ENCODE measurements at regions of chr20 and their contacts with region 1.

Region 1: DNA sequence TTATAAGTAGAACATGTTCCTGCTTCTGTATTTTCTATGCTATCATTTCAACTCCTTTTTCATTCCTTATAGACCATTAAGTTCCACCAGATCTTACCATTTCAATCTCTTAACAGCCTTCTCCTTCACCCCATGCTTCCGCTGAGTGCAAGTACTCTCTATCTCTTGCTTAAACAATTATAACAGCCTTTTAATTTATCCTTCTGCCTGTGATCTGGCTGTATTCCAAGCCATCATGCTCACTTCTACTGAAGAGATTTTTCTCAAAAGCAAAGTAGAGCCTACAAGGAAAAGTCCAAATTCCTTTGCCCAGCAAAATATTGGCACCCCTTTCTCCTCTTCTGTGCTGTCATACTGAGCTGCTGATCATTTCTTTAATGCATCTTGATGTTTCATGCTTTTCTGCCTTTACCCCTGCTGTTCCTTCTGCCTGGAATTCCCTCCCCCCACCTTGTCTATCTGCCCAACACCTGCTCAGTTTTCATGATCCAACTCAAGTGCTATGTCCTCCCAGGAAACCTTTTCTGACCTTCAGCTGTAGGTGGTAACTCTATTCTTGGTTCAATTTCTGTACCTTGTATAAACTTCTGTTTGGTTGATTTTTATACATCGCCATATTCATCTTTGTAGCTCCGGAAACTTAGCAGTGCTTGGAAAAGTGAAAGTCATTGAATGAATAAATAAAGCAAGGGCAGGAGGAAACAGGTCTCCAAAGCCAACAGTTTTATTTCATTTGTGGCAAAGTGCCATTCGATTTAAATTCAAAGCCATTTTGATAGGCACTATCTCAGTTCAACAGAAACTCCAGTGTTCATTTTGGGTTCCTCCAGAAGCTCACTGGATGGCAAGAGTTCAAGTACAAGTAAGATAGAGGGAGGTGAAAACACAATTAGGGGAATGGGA is 10.5 kb upstream of the BMP2 start:
- H3K4me3 ChIP-seq: no peak overlapping the region
- H3K27ac ChIP-seq: no peak overlapping the region
- H3K4me1 ChIP-seq: peaks cover 4% of the 10 kb centered on the region; the same call in 1 of the 2 replicates
- CTCF ChIP-seq: no peak

Region 2: DNA sequence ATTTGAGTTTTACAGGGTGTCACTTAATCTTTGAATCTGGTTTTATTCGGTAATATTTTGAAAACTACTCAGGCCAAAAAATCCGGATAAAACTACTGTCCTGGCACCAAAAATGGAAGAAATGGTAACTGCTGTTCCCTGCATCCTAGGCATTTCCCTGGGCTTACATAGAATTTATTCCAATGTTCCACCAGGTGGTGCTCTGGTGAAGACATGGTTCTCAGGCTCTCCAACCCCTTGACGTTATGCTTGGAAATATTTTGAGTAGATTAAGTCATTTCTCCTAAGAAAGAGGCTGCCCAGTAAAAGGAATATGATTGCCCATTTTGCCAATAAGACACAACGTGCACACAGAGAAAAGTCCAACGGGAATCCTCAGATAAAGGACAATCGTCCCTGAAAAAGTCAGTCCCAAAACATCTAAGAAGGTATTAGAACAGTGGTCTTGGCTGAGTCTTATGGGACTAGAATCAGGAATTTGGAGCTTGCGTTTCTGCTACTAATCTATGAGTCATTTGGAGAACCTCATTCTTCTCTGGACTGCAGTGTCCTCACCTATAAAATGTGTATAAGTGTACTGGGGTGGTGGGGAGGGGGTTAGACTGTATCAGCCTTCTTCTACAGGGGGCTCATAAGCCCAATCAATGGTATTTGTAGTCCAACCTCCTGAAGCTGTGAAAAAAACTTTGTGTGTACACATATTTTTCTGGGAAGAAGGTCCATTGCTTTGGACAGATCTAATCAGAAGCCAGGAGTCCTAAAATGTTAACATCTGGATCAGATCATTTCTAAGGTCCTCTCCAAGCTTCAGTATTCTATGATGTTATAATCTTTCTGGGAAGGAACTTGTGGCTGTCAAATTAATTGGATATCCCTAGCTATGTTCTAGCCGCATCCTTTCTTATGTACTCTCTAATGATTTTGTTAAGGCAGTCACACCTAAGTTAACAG is 120.5 kb before region 1 on chr20:
- CTCF ChIA-PET with region 1: interaction called, 10 read pairs
- POLR2A ChIA-PET with region 1: no interaction called
- H3K4me3 ChIP-seq: no peak overlapping the region
- H3K27ac ChIP-seq: no peak overlapping the region
- H3K4me1 ChIP-seq: no peaks in the 10 kb centered on the region
- CTCF ChIP-seq: no peak

Measured in HEK293 (cell line).